Activated naive CD4-positive, alpha-beta T cell treated with anti-CD3 and anti-CD28 coated beads for 36 hours (primary cell): ENCODE measurements at regions of chr17 and their contacts with region 1.

Region 1: DNA sequence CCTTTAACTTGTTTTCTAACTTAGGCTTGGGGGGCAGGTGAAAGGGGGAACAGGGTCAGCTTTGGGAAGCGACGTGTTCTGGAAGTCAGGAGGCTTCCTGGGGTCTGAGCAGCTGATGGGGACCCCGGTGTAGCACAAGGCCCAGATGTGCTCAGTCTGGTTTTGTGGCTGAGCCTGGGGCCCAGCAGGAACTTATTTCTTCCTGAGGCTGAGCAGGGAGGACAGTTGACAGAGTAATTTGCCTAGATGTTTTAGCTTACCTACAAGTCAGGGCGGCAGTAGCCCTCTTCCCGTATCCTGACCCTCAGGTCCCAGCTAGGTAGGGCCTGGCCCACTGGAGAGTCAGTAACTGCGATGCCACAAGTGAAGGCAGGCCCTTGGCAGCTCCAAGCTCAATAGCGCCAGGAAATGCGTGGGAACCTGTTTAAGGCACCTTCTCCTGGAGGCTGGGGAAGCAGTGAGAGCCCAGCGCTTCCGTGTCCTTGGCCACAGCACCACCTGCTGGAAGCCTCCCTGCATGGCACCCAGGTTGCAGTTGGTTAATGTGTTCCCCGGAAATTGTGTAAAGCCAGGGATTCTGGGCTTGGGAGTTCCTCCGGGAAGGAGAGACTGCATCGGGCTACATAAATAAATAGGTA is 5.2 kb downstream of the CCR7 start:
- DNase-seq: peak; percentile 93
- H3K4me3 Mint-ChIP-seq: peak overlapping the region; percentile 96
- H3K27ac Mint-ChIP-seq: peak overlapping the region; percentile 100
- H3K4me1 Mint-ChIP-seq: peaks cover 66% of the 10 kb centered on the region
- H3K27me3 Mint-ChIP-seq: no peaks in the 10 kb centered on the region

Region 2: DNA sequence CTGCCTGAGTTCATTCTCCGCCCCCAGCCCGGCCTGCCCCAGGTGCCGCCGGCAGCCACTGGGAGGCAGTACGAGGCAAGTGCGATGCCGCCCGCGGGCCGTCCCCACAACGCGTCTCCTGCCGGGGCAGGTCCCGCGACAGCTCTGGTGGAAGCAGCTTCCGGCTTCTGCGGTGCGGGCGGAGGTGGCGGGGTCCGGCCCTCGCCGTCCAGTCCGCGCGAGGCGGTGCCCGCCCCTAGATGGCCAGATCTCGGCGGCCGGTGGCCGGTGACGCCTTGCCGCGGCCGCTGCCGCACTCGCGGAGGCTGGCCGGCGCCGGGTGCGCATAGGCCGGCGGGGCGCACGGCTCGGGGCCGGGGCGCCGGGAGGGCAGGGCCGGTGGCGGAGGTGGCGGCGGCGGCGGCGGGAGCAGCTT is 197.4 kb before region 1 on chr17:
- CTCF ChIA-PET with region 1: interaction called, 13 read pairs
- intact Hi-C with region 1: loop called (anchors 1 kb)
- DNase-seq: peak; percentile 95
- H3K4me3 Mint-ChIP-seq: peak overlapping the region; percentile 76
- H3K27ac Mint-ChIP-seq: no peak overlapping the region
- H3K4me1 Mint-ChIP-seq: peaks cover 12% of the 10 kb centered on the region
- H3K27me3 Mint-ChIP-seq: peaks cover 12% of the 10 kb centered on the region

Region 3: GRCh38 chr17:40443583-40444327 is 116.3 kb before region 1 on chr17:
- CTCF ChIA-PET with region 1: interaction called, 9 read pairs
- intact Hi-C with region 1: loop called (anchors 1 kb)
- DNase-seq: peak; percentile 74
- H3K4me3 Mint-ChIP-seq: peak overlapping the region; percentile 78
- H3K27ac Mint-ChIP-seq: peak overlapping the region; percentile 76
- H3K4me1 Mint-ChIP-seq: peaks cover 29% of the 10 kb centered on the region
- H3K27me3 Mint-ChIP-seq: peaks cover 4% of the 10 kb centered on the region

Region 4: GRCh38 chr17:40480501-40481003 is 79.5 kb before region 1 on chr17:
- CTCF ChIA-PET with region 1: interaction called, 20 read pairs
- intact Hi-C with region 1: loop called (anchors 1 kb)
- DNase-seq: peak; percentile 95
- H3K4me3 Mint-ChIP-seq: peak overlapping the region; percentile 67
- H3K27ac Mint-ChIP-seq: peak overlapping the region; percentile 94
- H3K4me1 Mint-ChIP-seq: peaks cover 60% of the 10 kb centered on the region
- H3K27me3 Mint-ChIP-seq: no peaks in the 10 kb centered on the region

Region 5: DNA sequence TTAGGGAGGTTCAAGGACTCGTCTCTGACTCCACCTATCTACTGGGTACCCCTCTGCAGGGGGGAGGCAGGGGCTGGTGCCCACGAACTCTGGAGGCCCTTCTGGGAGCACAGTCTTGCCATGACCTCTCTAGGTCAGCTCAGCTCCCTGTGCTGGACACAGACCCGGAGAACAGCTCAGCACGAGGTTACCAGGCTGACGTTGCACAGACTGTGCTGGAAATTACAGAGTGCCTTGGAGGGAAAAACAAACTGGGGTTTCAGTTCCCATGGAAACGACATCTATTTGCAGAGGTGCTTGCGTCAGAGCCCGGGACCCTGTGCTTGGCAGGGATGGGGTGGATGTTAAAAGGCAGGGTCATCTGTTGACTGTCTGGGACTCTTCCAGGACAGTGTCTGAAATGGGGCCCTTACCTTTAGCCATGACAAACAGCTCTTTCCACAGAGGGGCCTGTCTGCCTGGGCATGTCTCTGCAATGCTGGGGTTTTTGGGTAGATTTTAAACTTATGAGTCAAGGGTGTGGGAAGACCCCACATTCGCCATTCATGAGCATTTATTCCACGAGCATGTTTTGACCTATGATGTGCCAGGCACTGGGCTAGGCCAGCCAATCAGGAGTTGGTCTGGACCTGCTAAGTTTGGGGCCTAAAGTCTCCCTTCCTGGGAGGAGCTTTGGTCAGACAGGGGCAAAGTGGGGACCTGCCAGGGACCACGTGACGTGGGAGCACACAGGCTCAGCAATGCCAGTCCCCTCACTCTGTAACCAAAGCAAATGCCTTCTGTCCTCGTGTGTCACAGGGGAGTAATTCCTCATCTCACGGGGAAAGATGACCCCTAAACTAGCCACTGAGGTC is 17.3 kb before region 1 on chr17:
- CTCF ChIA-PET with region 1: interaction called, 276 read pairs
- intact Hi-C with region 1: loop called (anchors 1 kb)
- DNase-seq: peak; percentile 89
- H3K4me3 Mint-ChIP-seq: peak overlapping the region; percentile 66
- H3K27ac Mint-ChIP-seq: peak overlapping the region; percentile 96
- H3K4me1 Mint-ChIP-seq: peaks cover 83% of the 10 kb centered on the region
- H3K27me3 Mint-ChIP-seq: no peaks in the 10 kb centered on the region

Region 6: GRCh38 chr17:40598663-40599467 is 38.8 kb after region 1 on chr17:
- CTCF ChIA-PET with region 1: interaction called, 90 read pairs
- intact Hi-C with region 1: loop called (anchors 1 kb)
- DNase-seq: peak; percentile 90
- H3K4me3 Mint-ChIP-seq: peak overlapping the region; percentile 67
- H3K27ac Mint-ChIP-seq: peak overlapping the region; percentile 98
- H3K4me1 Mint-ChIP-seq: peaks cover 95% of the 10 kb centered on the region
- H3K27me3 Mint-ChIP-seq: no peaks in the 10 kb centered on the region

Region 7: DNA sequence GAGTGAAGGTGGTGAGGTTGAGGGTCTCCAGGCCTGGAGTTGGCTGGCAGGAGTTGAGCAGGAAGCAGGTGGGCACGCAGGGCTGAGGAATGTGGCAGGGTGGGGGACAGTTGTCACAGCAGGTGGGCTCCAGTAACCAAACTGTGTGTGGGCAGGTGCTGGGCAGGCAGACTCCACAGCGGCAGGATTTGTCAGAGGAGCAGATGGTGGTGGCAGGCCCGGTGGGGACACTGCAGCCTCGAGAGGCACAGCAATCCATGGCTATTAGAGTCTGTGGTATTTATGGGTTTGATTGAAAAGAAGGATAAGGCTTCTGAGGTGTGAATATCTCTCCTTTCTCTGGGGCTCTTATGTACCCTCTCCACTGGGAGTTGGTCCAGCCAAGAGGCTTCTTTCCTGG is 433.8 kb after region 1 on chr17 and contains the start of gene KRTAP3-3:
- CTCF ChIA-PET with region 1: no interaction called
- intact Hi-C with region 1: no loop called
- DNase-seq: no peak
- H3K4me3 Mint-ChIP-seq: no peak within 1 kb of the TSS
- H3K27ac Mint-ChIP-seq: no peak within 1 kb of the TSS
- H3K4me1 Mint-ChIP-seq: no peaks in the 10 kb centered on the region
- H3K27me3 Mint-ChIP-seq: peaks cover 28% of the 10 kb centered on the region
- total RNA-seq, gene KRTAP3-3: not detected